Right ventricle myocardium inferior (tissue), 1 donor: ENCODE measurements at regions of chr6 and their contacts with region 1.

Region 1: GRCh38 chr6:64330694-64331307 is 695.2 kb downstream of the PHF3 start:
- DNase-seq: peak; percentile 67
- ATAC-seq: no peak

Region 2: GRCh38 chr6:63923139-63923739 is 407.6 kb before region 1 on chr6:
- intact Hi-C with region 1: loop called (anchors 2 kb)
- DNase-seq: no peak
- ATAC-seq: no peak

Region 3: GRCh38 chr6:64012351-64013001 is 318.3 kb before region 1 on chr6:
- intact Hi-C with region 1: loop called (anchors 5 kb)
- DNase-seq: no peak
- ATAC-seq: peak; percentile 79

Region 4: DNA sequence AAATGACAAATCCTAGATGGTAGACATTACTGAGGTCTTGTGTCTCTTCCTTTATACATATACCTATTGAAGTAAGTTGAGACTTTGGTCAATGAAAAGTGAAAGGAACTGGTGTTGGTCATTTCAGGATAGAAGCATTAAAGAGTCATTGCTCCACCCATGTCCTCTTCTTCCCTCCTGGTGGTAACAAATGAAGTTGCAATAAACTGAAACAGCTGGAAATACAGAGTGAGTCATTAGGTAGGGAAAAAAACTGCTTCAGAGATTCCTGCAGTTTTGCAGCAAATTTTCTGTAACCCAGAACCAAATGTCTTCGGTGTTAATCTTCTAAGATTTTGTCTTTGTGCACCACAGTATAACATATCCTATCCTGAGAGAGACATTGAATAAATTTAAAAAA is 928.3 kb after region 1 on chr6:
- intact Hi-C with region 1: no loop called
- DNase-seq: no peak
- ATAC-seq: no peak